ENCODE measurements at regions of chr11 and their contacts with region 1.

Region 1: DNA sequence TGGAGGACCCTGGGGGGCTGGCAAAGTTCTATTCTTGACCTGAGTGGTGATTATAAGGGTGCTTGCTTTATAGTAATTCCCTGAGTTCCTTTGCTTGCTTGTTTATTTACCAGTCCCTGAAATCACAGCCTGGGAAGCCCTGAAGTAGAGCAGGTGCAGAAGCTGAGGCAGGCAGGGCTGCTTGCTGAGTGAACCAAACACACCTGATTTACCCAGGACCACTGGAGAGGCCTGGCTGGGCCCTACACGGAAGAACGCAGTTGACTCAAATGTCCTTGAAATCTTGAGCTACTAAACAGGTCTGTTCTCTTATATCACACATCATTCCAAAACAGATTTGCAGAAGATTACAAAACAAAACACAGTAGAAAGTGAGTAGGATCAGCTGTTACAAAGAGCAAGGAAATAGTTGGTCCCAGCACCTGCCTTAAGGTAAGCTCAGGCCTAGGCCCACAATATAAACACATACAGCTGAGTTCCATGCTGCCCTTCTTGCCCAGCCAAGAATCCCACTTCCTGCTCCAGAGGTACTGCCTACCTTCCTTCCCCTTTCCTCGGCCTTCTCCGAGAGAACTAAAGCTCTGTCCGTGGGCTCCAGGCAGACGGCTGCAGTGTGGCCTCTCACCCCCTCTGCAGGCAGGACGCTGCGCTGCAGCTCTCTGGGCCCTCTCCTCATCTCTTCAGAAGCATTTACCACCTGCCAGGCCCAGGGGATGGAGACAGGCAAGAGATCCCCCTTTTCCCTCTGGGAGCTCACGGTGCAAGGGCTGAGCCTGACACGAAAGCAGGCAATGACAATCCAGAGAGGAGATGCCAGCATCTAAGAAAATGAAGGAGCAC is 46.1 kb upstream of the SCUBE2 start:
- DNase-seq: peak; percentile 83
- H3K4me3 Mint-ChIP-seq: no peak overlapping the region
- H3K27ac Mint-ChIP-seq: peak overlapping the region; percentile 10
- H3K4me1 Mint-ChIP-seq: peaks cover 32% of the 10 kb centered on the region
- H3K27me3 Mint-ChIP-seq: no peaks in the 10 kb centered on the region

Region 2: GRCh38 chr11:8925711-8926110 is 211.8 kb before region 1 on chr11:
- CTCF ChIA-PET with region 1: no interaction called
- POLR2A ChIA-PET with region 1: no interaction called
- intact Hi-C with region 1: no loop called
- DNase-seq: no peak
- H3K4me3 Mint-ChIP-seq: no peak overlapping the region
- H3K27ac Mint-ChIP-seq: no peak overlapping the region
- H3K4me1 Mint-ChIP-seq: no peaks in the 10 kb centered on the region
- H3K27me3 Mint-ChIP-seq: no peaks in the 10 kb centered on the region

Region 3: GRCh38 chr11:9003573-9004309 is 133.8 kb before region 1 on chr11 and contains the start of gene NRIP3:
- CTCF ChIA-PET with region 1: interaction called, 13 read pairs
- POLR2A ChIA-PET with region 1: interaction called, 4 read pairs
- intact Hi-C with region 1: loop called (anchors 1 kb)
- DNase-seq: peak; percentile 74
- H3K4me3 Mint-ChIP-seq: peak within 1 kb of the TSS; percentile 70
- H3K27ac Mint-ChIP-seq: no peak within 1 kb of the TSS
- H3K4me1 Mint-ChIP-seq: peaks cover 27% of the 10 kb centered on the region
- H3K27me3 Mint-ChIP-seq: peaks cover 36% of the 10 kb centered on the region
- total RNA-seq, gene NRIP3: 2.7 to 2.9 TPM

Region 4: DNA sequence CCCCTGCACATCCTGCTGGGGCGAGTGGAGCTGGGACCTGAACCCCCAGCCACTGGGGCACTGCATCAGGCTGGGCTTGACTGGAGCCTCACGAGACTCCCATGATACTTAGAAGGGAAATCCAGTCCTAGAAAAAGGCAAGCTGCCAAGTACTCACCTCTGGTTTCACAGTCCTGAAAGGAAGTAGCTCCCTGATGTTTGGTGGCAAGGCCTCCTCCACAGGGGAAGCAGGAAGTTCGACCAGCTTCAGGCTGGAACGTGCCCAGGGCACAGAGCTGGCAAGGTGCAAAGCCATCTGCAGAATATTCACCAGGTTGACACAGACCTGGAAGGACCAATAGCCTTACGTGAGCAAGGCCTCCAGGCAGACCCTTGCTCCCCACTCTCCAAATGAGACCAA is 106.9 kb before region 1 on chr11:
- CTCF ChIA-PET with region 1: interaction called, 10 read pairs
- POLR2A ChIA-PET with region 1: no interaction called
- intact Hi-C with region 1: no loop called
- DNase-seq: no peak
- H3K4me3 Mint-ChIP-seq: no peak overlapping the region
- H3K27ac Mint-ChIP-seq: no peak overlapping the region
- H3K4me1 Mint-ChIP-seq: no peaks in the 10 kb centered on the region
- H3K27me3 Mint-ChIP-seq: no peaks in the 10 kb centered on the region

Region 5: GRCh38 chr11:9109939-9110731 is 27.4 kb before region 1 on chr11:
- CTCF ChIA-PET with region 1: interaction called, 10 read pairs
- POLR2A ChIA-PET with region 1: no interaction called
- intact Hi-C with region 1: no loop called
- DNase-seq: no peak
- H3K4me3 Mint-ChIP-seq: no peak overlapping the region
- H3K27ac Mint-ChIP-seq: no peak overlapping the region
- H3K4me1 Mint-ChIP-seq: peaks cover 3% of the 10 kb centered on the region
- H3K27me3 Mint-ChIP-seq: no peaks in the 10 kb centered on the region

Region 6: DNA sequence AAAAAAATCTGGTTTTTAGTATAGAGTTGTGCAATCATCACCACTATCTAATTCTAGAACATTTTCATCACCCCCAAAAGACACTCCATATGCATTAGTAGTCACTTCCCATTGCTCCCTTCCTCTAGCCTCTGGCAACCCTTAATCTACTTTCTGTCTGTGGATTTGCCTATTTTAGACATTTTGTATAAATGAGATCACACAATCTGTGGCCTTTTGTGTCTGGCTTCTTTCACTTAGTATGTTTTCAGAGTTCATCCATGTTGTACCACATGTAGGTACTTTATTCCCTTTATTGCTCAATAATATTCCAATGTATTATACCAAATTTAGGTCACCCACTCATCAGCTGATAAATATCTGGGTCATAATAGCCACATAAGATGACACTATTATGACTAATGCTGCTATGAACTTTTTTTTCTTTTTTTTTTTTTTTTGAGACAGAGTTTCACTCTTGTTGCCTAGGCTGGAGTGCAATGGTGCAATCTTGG is 21.4 kb after region 1 on chr11:
- CTCF ChIA-PET with region 1: interaction called, 12 read pairs
- POLR2A ChIA-PET with region 1: no interaction called
- intact Hi-C with region 1: no loop called
- DNase-seq: no peak
- H3K4me3 Mint-ChIP-seq: no peak overlapping the region
- H3K27ac Mint-ChIP-seq: peak overlapping the region; percentile 3
- H3K4me1 Mint-ChIP-seq: peaks cover 26% of the 10 kb centered on the region
- H3K27me3 Mint-ChIP-seq: no peaks in the 10 kb centered on the region

Measured in activated CD4-positive, alpha-beta memory T cell treated with anti-CD3 and anti-CD28 coated beads for 36 hours (primary cell).